ENCODE measurements at regions of chr19 and their contacts with region 1.

Region 1: DNA sequence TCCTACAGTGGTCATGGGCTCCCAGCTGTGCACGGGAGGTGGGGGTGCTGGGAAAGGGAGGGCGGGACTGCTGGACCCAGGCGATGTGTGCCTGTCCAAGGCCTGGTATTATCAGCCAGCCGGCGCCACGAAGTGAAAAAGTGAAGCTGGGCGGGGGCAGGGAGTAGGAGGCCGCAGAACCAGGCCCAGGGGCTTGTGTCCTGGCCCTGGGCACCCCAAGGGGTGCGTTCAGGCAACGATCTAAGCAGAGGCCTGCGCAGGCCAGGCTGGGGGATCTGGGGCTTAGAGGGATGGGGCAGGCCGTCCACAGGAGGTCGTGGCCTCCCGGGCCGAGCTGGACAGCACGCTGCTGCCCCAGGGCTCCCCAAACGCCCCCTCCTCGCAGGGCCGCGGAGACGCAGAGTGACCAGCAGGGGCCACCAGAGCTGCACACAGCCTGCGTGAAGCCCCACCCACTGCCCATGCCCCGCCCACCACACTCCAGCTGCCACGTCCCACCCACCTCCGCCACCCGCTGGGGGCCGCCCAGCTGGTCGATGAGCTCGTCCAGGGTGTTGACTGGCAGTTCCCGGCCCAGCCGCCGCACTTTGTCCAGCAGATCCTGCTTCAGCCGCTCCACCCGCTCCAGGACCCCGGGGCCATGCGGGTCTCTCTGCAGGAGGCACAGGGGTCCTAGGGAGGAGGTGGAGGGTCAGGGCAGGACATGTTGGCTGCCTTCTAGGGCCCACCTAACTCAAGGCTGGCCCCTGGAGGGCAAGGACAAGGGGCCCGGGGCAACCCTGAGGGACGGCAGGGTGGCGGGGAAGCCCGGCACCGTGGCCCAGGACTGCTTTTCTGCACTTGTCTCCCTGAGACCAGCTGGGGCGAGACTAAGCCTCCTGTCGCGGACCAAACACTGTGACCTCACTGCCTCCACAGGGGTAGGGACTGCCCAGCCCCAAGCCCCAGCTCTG is 9.5 kb downstream of the GPX4 start:
- DNase-seq: peak; percentile 80 to 99
- H3K4me3 ChIP-seq: no peak overlapping the region
- H3K27ac ChIP-seq: peak overlapping the region; percentile 17; the same call in 1 of the 2 replicates
- H3K4me1 ChIP-seq: peaks cover 0 to 3% (median 2%) of the 10 kb centered on the region in 4 experiments; a peak in 5 of 7 replicates
- H3K27me3 ChIP-seq: no peaks in the 10 kb centered on the region
- CTCF ChIP-seq: peak; percentile 83 to 96 (median 83)
- EP300 ChIP-seq: no peak
- POLR2A ChIP-seq: no peak
- RAD21 ChIP-seq: peak; percentile 87 to 91

Region 2: DNA sequence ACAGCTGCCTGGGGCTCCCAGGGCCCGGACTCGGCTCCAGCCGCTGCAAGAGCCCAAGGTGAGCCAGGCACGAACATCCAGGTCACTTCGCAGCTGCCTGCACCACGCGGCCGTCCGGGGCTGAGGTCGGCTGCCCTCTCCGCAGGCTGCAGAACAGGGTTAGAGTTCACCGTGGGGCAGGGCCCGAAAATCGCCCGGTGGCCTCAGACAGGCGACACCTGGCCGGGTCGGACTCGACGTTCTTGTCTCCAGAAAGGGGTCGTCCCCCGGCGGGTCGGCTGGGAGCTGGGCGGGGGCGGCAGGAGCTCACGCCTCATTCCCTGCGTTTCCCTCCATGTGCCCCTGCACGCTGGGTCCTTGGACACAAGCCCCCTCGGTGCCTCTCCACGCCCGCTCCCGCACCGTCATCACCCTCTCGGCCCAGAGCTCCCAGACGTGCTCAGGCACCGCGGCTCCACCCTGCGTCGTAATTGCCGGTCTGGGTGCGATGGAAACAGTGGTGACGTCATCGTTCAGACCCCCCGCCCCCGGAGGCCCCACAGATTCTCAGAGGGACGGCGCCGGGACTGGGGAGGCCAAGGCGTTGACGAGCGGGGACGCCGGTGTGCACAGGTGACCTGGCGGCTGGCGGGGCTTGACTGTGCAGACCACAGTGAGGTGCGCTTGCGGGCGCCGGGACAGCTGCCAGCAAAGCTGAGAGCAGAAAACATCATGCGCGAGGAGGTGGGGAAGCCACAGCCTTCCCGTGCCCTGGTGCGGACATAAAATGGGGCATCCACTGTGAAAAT is 117.1 kb before region 1 on chr19:
- CTCF ChIA-PET with region 1: no interaction called
- POLR2A ChIA-PET with region 1: no interaction called
- DNase-seq: peak in 1 of 2 experiments; percentile 77
- H3K4me3 ChIP-seq: peak overlapping the region in 3 of 4 experiments; percentile 29 to 50 (median 34); a peak in 5 of 8 replicates
- H3K27ac ChIP-seq: no peak overlapping the region
- H3K4me1 ChIP-seq: peaks cover 0 to 10% (median 5%) of the 10 kb centered on the region in 4 experiments; a peak in 3 of 7 replicates
- H3K27me3 ChIP-seq: peaks cover 6 to 27% (median 14%) of the 10 kb centered on the region in 4 experiments; a peak in 6 of 7 replicates
- CTCF ChIP-seq: no peak
- EP300 ChIP-seq: no peak
- POLR2A ChIP-seq: no peak; a peak in 1 of 3 replicates
- RAD21 ChIP-seq: no peak

Region 3: GRCh38 chr19:1009041-1009975 is 104.0 kb before region 1 on chr19:
- CTCF ChIA-PET with region 1: no interaction called
- POLR2A ChIA-PET with region 1: no interaction called
- DNase-seq: no peak
- H3K4me3 ChIP-seq: no peak overlapping the region
- H3K27ac ChIP-seq: no peak overlapping the region
- H3K4me1 ChIP-seq: no peaks in the 10 kb centered on the region
- H3K27me3 ChIP-seq: no peaks in the 10 kb centered on the region
- CTCF ChIP-seq: no peak
- EP300 ChIP-seq: no peak
- POLR2A ChIP-seq: no peak
- RAD21 ChIP-seq: no peak

Region 4: GRCh38 chr19:1057176-1057855 is 56.0 kb before region 1 on chr19:
- CTCF ChIA-PET with region 1: no interaction called
- POLR2A ChIA-PET with region 1: no interaction called
- DNase-seq: no peak
- H3K4me3 ChIP-seq: no peak overlapping the region
- H3K27ac ChIP-seq: no peak overlapping the region
- H3K4me1 ChIP-seq: peaks cover 0 to 2% (median 0%) of the 10 kb centered on the region in 4 experiments; a peak in 1 of 7 replicates
- H3K27me3 ChIP-seq: no peaks in the 10 kb centered on the region; a peak in 1 of 7 replicates
- CTCF ChIP-seq: no peak
- EP300 ChIP-seq: no peak
- POLR2A ChIP-seq: no peak
- RAD21 ChIP-seq: no peak

Region 5: DNA sequence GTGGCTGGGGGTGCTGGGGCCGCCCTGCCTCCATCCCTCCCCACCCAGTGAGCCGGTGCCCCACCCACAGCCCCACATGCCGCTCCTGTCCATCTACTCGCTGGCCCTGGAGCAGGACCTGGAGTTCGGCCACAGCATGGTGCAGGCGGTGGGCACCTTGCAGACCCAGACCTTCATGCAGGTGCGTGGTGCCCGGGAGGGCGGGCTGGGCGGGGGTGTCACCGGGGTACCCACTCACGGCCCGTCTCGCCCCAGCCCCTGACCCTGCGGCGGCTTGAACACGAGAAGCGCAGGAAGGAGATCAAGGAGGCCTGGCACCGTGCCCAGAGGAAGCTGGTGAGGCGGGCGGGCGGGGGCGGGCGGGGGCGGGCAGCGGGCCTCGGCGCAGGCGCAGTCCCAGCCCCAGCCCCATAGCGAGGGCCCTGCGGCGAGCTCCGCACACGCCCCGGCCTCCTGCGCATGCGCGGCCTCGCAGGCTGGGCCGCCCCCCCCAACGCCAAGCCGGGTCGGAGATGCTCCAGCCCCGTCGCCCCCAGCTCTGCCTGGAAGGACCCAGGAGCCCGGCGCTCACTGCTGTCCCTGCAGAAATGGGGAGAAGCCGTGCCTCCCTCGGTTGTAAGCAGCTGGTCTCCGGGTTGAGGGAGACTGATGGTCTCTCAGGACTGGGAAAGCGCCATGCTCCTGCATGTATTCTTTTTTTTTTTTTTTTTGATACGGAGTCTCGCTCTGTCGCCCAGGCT is 38.6 kb before region 1 on chr19:
- CTCF ChIA-PET with region 1: interaction called, 10 read pairs
- POLR2A ChIA-PET with region 1: interaction called, 5 read pairs
- DNase-seq: no peak
- H3K4me3 ChIP-seq: no peak overlapping the region
- H3K27ac ChIP-seq: no peak overlapping the region
- H3K4me1 ChIP-seq: peaks cover 0 to 4% (median 1%) of the 10 kb centered on the region in 4 experiments; a peak in 2 of 7 replicates
- H3K27me3 ChIP-seq: peaks cover 0 to 4% (median 2%) of the 10 kb centered on the region in 4 experiments; a peak in 2 of 7 replicates
- CTCF ChIP-seq: no peak
- EP300 ChIP-seq: no peak
- POLR2A ChIP-seq: no peak
- RAD21 ChIP-seq: no peak

Region 6: DNA sequence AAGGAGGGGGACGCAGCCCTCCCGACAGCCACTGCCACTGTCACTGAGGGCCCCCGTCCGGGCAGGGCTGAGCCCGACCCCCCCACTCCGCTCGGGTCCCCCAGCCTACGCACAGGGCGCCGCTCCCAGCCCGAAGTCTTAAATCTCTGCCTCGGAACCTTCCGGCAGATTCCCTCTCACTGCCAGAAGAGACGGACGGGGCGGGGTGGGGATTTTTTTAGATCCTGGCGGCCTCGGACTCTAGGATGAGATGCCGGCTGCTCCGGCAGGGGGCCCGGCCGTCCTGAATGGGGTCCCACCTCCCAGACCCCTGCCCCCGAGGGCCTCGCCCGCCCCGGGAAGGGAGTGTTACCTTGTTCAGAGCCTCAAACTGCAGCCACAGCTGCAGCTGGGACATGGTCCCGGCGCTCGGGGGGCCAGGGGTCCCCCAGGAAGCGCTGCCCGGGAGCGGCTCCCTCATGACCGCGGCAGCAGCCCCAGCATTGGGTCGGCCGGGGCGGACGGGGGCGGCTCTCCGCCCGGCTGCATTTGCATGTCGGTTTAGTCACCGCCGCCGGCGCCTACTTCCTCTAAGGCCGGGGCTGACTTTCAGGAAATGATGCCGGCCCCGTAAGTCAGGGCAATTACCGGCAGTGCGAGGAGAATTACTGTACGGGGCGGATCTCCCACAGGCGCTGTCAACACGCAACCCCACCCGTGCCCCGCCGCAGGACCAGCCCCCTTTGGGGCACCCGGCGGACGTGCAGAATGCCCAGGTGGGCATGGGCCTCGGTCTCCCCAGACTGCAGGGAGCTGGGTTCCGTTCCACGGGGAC is 18.6 kb after region 1 on chr19:
- CTCF ChIA-PET with region 1: interaction called, 13 read pairs
- POLR2A ChIA-PET with region 1: interaction called, 4 read pairs
- DNase-seq: no peak
- H3K4me3 ChIP-seq: peak overlapping the region; percentile 11 to 52 (median 37); a peak in 7 of 8 replicates
- H3K27ac ChIP-seq: no peak overlapping the region; the same call in 1 of the 2 replicates
- H3K4me1 ChIP-seq: peaks cover 0 to 15% (median 7%) of the 10 kb centered on the region in 4 experiments; a peak in 6 of 7 replicates
- H3K27me3 ChIP-seq: no peaks in the 10 kb centered on the region
- CTCF ChIP-seq: no peak
- EP300 ChIP-seq: no peak
- POLR2A ChIP-seq: no peak
- RAD21 ChIP-seq: no peak

Region 7: GRCh38 chr19:1173845-1174809 is 60.8 kb after region 1 on chr19 and contains the start of gene SBNO2:
- CTCF ChIA-PET with region 1: interaction called, 17 read pairs
- POLR2A ChIA-PET with region 1: no interaction called
- DNase-seq: peak; percentile 70 to 100
- H3K4me3 ChIP-seq: peak within 1 kb of the TSS; percentile 72 to 100 (median 78)
- H3K27ac ChIP-seq: peak within 1 kb of the TSS; percentile 53; the same call in 1 of the 2 replicates
- H3K4me1 ChIP-seq: peaks cover 0 to 26% (median 14%) of the 10 kb centered on the region in 4 experiments; a peak in 5 of 7 replicates
- H3K27me3 ChIP-seq: no peaks in the 10 kb centered on the region; a peak in 1 of 7 replicates
- CTCF ChIP-seq: no peak
- EP300 ChIP-seq: no peak
- POLR2A ChIP-seq: peak in 1 of 2 experiments; percentile 77; a peak in 2 of 3 replicates
- RAD21 ChIP-seq: no peak
- total RNA-seq, gene SBNO2: 31.4 and 37.4 TPM in 2 replicates

Region 8: GRCh38 chr19:1189419-1189818 is 76.1 kb after region 1 on chr19:
- CTCF ChIA-PET with region 1: interaction called, 15 read pairs
- POLR2A ChIA-PET with region 1: interaction called, 3 read pairs
- DNase-seq: no peak
- H3K4me3 ChIP-seq: no peak overlapping the region; a peak in 2 of 8 replicates
- H3K27ac ChIP-seq: no peak overlapping the region
- H3K4me1 ChIP-seq: 0 out of 7 replicates have a peak, but pooled peaks cover 0 to 2% (median 0%) of the 10 kb centered on the region in 4 experiments
- H3K27me3 ChIP-seq: no peaks in the 10 kb centered on the region
- CTCF ChIP-seq: no peak
- EP300 ChIP-seq: no peak
- POLR2A ChIP-seq: no peak
- RAD21 ChIP-seq: no peak

Region 9: DNA sequence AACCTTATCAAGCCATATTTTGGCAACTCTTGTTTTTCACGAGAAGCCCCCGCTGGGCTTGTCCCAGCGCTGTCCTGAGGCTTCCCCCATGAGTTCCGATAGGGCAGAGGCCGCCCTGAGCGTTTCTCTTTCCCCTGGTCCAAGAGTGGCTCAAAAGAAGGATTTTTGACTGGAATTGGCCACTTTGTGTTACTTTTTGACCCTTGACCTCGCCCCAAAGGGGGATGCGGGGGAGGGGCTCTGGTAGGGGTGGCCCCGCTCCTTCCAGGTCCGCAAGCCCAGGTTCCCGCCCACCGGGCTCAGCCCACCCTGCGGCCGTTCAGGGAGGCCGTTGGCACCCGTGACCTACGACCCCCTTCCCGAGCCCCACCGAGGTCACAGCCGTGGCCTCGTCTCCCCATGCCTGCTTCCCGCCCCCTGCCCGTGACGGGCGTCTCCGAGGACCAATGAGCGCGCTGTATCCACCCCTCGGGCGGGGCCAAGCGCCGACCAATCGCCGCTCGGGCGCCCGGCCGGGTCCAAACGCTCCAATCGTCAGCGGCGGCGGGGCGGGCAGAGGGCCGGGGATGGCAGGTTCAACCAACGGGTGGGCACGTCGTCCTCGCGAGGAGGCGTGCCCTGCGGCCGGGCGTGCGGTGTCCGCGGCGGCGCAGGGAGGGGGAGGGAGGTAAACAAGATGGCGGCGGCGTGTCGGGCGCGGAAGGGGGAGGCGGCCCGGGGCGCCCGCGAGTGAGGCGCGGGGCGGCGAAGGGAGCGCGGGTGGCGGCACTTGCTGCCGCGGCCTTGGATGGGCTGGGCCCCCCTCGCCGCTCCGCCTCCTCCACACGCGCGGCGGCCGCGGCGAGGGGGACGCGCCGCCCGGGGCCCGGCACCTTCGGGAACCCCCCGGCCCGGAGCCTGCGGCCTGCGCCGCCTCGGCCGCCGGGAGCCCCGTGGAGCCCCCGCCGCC is 92.1 kb after region 1 on chr19 and contains the start of gene STK11:
- CTCF ChIA-PET with region 1: interaction called, 19 read pairs
- POLR2A ChIA-PET with region 1: interaction called, 3 read pairs
- DNase-seq: peak; percentile 86 to 100
- H3K4me3 ChIP-seq: peak within 1 kb of the TSS; percentile 66 to 86 (median 76)
- H3K27ac ChIP-seq: peak within 1 kb of the TSS; percentile 71; the same call in 1 of the 2 replicates
- H3K4me1 ChIP-seq: peaks cover 0 to 18% (median 14%) of the 10 kb centered on the region in 4 experiments; a peak in 6 of 7 replicates
- H3K27me3 ChIP-seq: no peaks in the 10 kb centered on the region
- CTCF ChIP-seq: no peak; a peak in 1 of 4 replicates
- EP300 ChIP-seq: no peak
- POLR2A ChIP-seq: peak in 1 of 2 experiments; percentile 46; a peak in 1 of 3 replicates
- RAD21 ChIP-seq: no peak
- total RNA-seq, gene STK11: 70.7 and 75.2 TPM in 2 replicates

Region 10: GRCh38 chr19:1223018-1223855 is 109.9 kb after region 1 on chr19:
- CTCF ChIA-PET with region 1: interaction called, 27 read pairs
- POLR2A ChIA-PET with region 1: interaction called, 3 read pairs
- DNase-seq: peak in 1 of 2 experiments; percentile 80
- H3K4me3 ChIP-seq: no peak overlapping the region
- H3K27ac ChIP-seq: no peak overlapping the region; the same call in 1 of the 2 replicates
- H3K4me1 ChIP-seq: no peaks in the 10 kb centered on the region; a peak in 1 of 7 replicates
- H3K27me3 ChIP-seq: no peaks in the 10 kb centered on the region
- CTCF ChIP-seq: peak; percentile 72 to 91 (median 79)
- EP300 ChIP-seq: no peak
- POLR2A ChIP-seq: no peak
- RAD21 ChIP-seq: peak; percentile 51 to 63

Region 11: GRCh38 chr19:1282588-1283206 is 169.4 kb after region 1 on chr19:
- CTCF ChIA-PET with region 1: no interaction called
- POLR2A ChIA-PET with region 1: no interaction called
- DNase-seq: no peak
- H3K4me3 ChIP-seq: no peak overlapping the region
- H3K27ac ChIP-seq: no peak overlapping the region
- H3K4me1 ChIP-seq: peaks cover 0 to 20% (median 9%) of the 10 kb centered on the region in 4 experiments; a peak in 5 of 7 replicates
- H3K27me3 ChIP-seq: peaks cover 0 to 21% (median 12%) of the 10 kb centered on the region in 4 experiments; a peak in 5 of 7 replicates
- CTCF ChIP-seq: no peak
- EP300 ChIP-seq: no peak
- POLR2A ChIP-seq: no peak
- RAD21 ChIP-seq: no peak

Measured in H1 (cell line).